ENCODE measurements at regions of chr7 and their contacts with region 1.

Region 1: DNA sequence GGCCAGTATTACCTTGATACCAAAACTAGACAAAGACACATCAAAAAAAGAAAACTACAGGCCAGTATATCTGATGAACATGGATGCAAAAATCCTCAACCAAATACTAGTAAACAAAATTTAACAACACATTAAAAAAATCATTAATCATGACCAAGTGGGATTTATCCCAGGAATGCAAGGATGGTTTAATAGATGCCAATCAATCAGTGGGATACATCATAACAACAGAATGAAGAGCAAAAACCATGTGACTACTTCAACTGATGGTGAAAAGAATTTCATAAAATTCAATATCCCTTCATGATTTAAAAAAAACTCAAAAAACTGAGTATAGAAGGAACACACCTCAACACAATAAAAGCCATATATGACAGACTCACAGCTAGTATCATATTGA is 25.2 kb upstream of the UBN2 start:
- DNase-seq: no peak
- H3K4me3 ChIP-seq: no peak overlapping the region
- H3K27ac ChIP-seq: no peak overlapping the region
- H3K4me1 ChIP-seq: no peaks in the 10 kb centered on the region
- H3K27me3 ChIP-seq: no peaks in the 10 kb centered on the region
- CTCF ChIP-seq: no peak

Region 2: GRCh38 chr7:138184191-138184590 is 1021.7 kb before region 1 on chr7:
- CTCF ChIA-PET with region 1: no interaction called
- POLR2A ChIA-PET with region 1: interaction called, 10 read pairs
- intact Hi-C with region 1: no loop called
- DNase-seq: no peak
- H3K4me3 ChIP-seq: no peak overlapping the region
- H3K27ac ChIP-seq: no peak overlapping the region
- H3K4me1 ChIP-seq: no peaks in the 10 kb centered on the region
- H3K27me3 ChIP-seq: no peaks in the 10 kb centered on the region
- CTCF ChIP-seq: no peak